Panc1 (cell line): ENCODE measurements at regions of chr1 and their contacts with region 1.

Region 1: GRCh38 chr1:68120136-68120791 is 69.8 kb upstream of the DIRAS3 start:
- DNase-seq: peak; percentile 75
- ATAC-seq: peak; percentile 78
- H3K4me3 ChIP-seq: no peak overlapping the region
- H3K27ac ChIP-seq: no peak overlapping the region
- H3K4me1 ChIP-seq: no peaks in the 10 kb centered on the region; the same call in 1 of the 2 replicates
- H3K27me3 ChIP-seq: no peaks in the 10 kb centered on the region
- CTCF ChIP-seq: peak; percentile 84

Region 2: DNA sequence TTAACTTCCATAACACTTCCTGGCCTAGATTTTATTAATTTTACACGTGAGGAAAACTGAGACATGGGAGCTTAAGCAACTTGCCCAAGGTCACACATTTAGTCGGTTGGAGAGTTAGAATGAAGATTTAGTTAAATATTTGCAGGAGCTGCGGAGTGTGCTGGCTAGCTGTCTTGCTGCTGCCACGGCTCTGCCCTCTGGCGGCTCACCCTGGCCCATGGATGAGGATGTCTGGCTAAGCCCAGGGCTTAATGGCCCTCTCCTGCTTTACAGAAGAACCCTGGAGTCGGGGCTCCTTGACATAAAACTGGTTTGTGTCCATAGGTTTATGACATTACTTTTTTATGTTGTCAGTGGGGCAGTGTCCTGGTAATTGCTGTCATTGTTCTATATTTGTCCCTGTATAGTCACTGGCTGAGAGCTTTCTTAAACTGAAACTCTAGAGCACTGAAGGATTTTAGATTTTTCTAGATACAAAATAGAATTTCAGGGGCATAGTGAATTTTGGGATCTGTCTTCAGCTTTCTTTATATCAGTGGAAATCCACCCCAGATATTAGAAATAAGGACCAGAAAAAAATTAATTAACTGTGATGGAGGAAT is 200.9 kb after region 1 on chr1:
- CTCF ChIA-PET with region 1: interaction called, 29 read pairs
- POLR2A ChIA-PET with region 1: no interaction called
- in situ Hi-C with region 1: no loop called
- intact Hi-C with region 1: loop called (anchors 1 kb)
- DNase-seq: no peak
- ATAC-seq: peak; percentile 99
- H3K4me3 ChIP-seq: no peak overlapping the region
- H3K27ac ChIP-seq: no peak overlapping the region
- H3K4me1 ChIP-seq: 0 out of 2 replicates have a peak, but pooled peaks cover 2% of the 10 kb centered on the region
- H3K27me3 ChIP-seq: no peaks in the 10 kb centered on the region
- CTCF ChIP-seq: peak; percentile 91

Region 3: GRCh38 chr1:68346188-68346808 is 226.0 kb after region 1 on chr1:
- CTCF ChIA-PET with region 1: interaction called, 10 read pairs
- POLR2A ChIA-PET with region 1: no interaction called
- in situ Hi-C with region 1: no loop called
- intact Hi-C with region 1: loop called (anchors 2 kb)
- DNase-seq: no peak
- ATAC-seq: no peak
- H3K4me3 ChIP-seq: no peak overlapping the region
- H3K27ac ChIP-seq: no peak overlapping the region
- H3K4me1 ChIP-seq: no peaks in the 10 kb centered on the region
- H3K27me3 ChIP-seq: no peaks in the 10 kb centered on the region
- CTCF ChIP-seq: peak; percentile 62; the same call in 1 of the 2 replicates

Region 4: GRCh38 chr1:68442822-68443556 is 322.7 kb after region 1 on chr1:
- CTCF ChIA-PET with region 1: interaction called, 7 read pairs
- POLR2A ChIA-PET with region 1: interaction called, 15 read pairs
- in situ Hi-C with region 1: no loop called
- intact Hi-C with region 1: loop called (anchors 2 kb)
- DNase-seq: peak; percentile 48
- ATAC-seq: peak; percentile 81
- H3K4me3 ChIP-seq: no peak overlapping the region
- H3K27ac ChIP-seq: no peak overlapping the region
- H3K4me1 ChIP-seq: no peaks in the 10 kb centered on the region
- H3K27me3 ChIP-seq: no peaks in the 10 kb centered on the region; the same call in 1 of the 2 replicates
- CTCF ChIP-seq: peak; percentile 79